Right ventricle myocardium superior (tissue), 1 donor: ENCODE measurements at regions of chr22 and their contacts with region 1.

Region 1: GRCh38 chr22:29541845-29542244 is 11.7 kb downstream of the THOC5 start:
- DNase-seq: no peak
- ATAC-seq: no peak

Region 2: GRCh38 chr22:29288837-29289236 is 253.0 kb before region 1 on chr22:
- intact Hi-C with region 1: loop called (anchors 10 kb)
- DNase-seq: no peak
- ATAC-seq: no peak

Region 3: DNA sequence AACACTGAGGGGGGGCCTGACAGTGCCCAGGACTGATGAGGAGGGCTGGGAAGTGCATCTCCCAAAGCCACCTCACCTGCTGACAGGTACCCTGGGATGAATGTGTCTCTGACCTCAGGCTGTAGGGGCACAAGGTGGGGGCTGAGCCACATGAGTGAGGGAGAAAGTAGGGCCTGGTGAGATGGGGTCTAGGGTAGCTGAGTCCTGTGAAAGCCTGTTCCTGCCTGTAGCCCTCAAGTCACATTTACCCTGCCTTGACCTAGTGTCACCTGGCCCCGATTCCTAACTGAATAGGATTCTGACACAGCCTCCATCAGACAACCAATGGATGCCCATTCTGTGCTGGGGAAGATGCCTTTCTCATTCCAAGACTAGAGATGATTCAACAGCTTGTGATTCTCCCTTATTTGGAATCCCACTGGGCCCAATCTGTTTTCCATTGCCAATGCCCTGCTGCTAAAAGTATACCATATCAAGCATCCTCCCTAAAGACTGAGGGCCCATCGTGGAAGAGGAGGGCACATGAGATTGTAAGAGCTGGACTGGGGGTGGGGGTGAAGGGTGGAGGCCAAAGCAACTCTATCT is 114.6 kb before region 1 on chr22:
- intact Hi-C with region 1: no loop called
- DNase-seq: no peak
- ATAC-seq: no peak

Region 4: DNA sequence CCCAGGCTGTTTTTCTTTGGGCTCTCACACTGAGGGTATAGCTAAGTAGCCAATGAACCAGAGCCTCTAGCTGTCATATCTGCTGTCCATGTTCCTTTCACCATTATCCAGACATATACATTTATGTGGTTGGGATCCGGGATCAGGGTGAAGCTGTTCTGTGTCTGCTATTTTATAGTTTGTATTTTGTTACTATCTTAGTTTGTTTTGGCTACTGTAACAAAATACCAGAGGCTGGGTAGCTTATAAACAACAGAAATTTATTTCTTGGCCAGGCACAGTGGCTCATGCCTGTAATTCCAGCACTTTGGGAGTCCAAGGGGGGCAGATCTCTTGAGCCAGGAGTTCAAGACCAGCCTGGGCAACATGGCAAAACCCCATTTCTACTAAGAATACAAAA is 137.5 kb after region 1 on chr22:
- intact Hi-C with region 1: no loop called
- DNase-seq: no peak
- ATAC-seq: no peak